ENCODE measurements at regions of chr7 and their contacts with region 1.

Region 1: DNA sequence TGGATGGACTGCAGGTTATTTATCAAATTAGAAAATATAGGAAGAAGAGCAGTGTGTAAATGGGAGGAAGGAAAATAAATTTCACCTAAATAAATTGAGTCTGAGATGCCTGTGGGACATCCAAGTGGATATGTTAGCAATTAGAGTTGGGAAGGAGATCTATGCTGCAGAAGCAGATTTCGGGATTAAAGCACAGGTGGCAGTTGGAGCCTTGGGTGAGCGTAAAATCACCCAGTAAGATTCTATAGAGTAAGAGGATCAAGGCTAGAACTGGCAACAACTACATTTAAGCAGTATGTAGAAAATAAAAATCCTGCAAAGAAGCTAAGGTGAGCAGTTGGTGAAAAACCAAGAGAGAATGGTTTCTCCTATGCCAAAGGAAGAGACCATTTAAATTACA is 8.4 kb downstream of the TRIM4 start:
- DNase-seq: no peak
- ATAC-seq: no peak
- H3K4me3 ChIP-seq: no peak overlapping the region
- H3K27ac ChIP-seq: no peak overlapping the region
- H3K4me1 ChIP-seq: no peaks in the 10 kb centered on the region
- H3K27me3 ChIP-seq: no peaks in the 10 kb centered on the region
- CTCF ChIP-seq: no peak

Region 2: GRCh38 chr7:99949638-99950228 is 38.8 kb after region 1 on chr7:
- CTCF ChIA-PET with region 1: no interaction called
- POLR2A ChIA-PET with region 1: no interaction called
- intact Hi-C with region 1: loop called (anchors 1 kb)
- DNase-seq: peak; percentile 14
- ATAC-seq: no peak
- H3K4me3 ChIP-seq: no peak overlapping the region
- H3K27ac ChIP-seq: no peak overlapping the region
- H3K4me1 ChIP-seq: no peaks in the 10 kb centered on the region
- H3K27me3 ChIP-seq: no peaks in the 10 kb centered on the region
- CTCF ChIP-seq: peak; percentile 41; the same call in 1 of the 2 replicates

Region 3: GRCh38 chr7:99990460-99990852 is 79.5 kb after region 1 on chr7:
- CTCF ChIA-PET with region 1: interaction called, 9 read pairs
- POLR2A ChIA-PET with region 1: no interaction called
- intact Hi-C with region 1: loop called (anchors 1 kb)
- DNase-seq: no peak
- ATAC-seq: no peak
- H3K4me3 ChIP-seq: no peak overlapping the region; the same call in 1 of the 2 replicates
- H3K27ac ChIP-seq: no peak overlapping the region
- H3K4me1 ChIP-seq: 0 out of 2 replicates have a peak, but pooled peaks cover 5% of the 10 kb centered on the region
- H3K27me3 ChIP-seq: peaks cover 5% of the 10 kb centered on the region; the same call in 1 of the 2 replicates
- CTCF ChIP-seq: no peak

Measured in PC-3 (cell line).